ENCODE measurements at regions of chr11 and their contacts with region 1.

Region 1: GRCh38 chr11:36034551-36035331 is 90.9 kb downstream of the LDLRAD3 start:
- DNase-seq: peak; percentile 90
- ATAC-seq: peak; percentile 90
- H3K4me3 ChIP-seq: no peak overlapping the region
- H3K27ac ChIP-seq: no peak overlapping the region; the same call in 1 of the 2 replicates
- H3K4me1 ChIP-seq: peaks cover 25% of the 10 kb centered on the region
- H3K27me3 ChIP-seq: no peaks in the 10 kb centered on the region
- CTCF ChIP-seq: no peak
- POLR2A ChIP-seq: no peak
- RAD21 ChIP-seq: peak; percentile 40

Region 2: DNA sequence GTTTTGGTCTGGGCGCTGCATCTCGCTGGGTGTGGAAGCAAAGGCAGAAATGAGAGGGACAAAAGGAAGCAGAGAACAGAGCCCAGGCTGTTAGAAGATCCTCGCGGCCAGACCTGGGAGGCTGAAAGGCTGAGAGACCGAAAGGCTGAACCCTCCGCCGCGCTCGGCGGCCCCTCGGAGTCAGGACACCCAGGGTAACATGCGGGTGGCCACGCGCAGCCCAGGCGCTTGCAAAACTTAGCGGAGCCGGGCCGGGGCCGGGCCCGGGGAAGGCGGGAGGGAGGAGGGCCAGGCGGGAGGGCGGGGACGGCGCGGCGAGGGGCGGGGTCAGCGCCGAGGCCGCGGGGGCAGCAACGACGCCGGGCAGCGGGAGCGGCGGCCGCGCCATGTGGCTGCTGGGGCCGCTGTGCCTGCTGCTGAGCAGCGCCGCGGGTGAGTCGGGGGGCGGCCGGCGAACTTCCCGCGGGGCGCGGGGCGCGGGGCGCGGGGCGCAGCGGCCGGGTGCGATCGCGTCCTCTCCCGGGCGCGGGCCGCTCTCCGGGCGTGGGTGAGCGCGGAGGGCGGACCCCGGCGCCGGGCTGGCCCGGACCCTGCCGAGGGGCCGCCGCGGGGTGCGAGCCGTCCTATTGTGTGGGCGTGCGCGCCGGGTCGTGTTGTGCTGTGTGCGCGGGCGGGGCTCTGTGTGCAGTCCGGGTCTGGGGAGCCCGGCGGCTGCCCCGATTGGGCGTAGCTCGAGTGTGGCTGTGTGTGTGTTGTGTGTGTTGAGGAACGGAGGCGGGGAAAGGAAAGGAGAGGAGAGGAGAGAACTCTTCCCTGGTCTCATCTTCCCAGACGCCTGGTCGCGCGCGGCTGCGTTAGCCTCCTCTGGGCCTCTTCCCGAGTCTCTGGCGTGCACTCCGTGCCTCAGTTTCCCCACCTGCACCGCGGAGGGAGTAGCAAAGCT is 90.8 kb before region 1 on chr11 and contains the start of gene LDLRAD3:
- CTCF ChIA-PET with region 1: no interaction called
- POLR2A ChIA-PET with region 1: no interaction called
- dilution Hi-C with region 1: no loop called
- in situ Hi-C with region 1: no loop called
- intact Hi-C with region 1: loop called (anchors 5 kb)
- DNase-seq: peak; percentile 82
- ATAC-seq: peak; percentile 94
- H3K4me3 ChIP-seq: peak within 1 kb of the TSS; percentile 71
- H3K27ac ChIP-seq: peak within 1 kb of the TSS; percentile 91
- H3K4me1 ChIP-seq: peaks cover 4% of the 10 kb centered on the region; the same call in 1 of the 2 replicates
- H3K27me3 ChIP-seq: peaks cover 8% of the 10 kb centered on the region
- CTCF ChIP-seq: no peak
- POLR2A ChIP-seq: peak; percentile 17; the same call in 1 of the 2 replicates
- RAD21 ChIP-seq: no peak
- total RNA-seq, gene LDLRAD3: 2.7 and 3.6 TPM in 2 replicates

Region 3: GRCh38 chr11:36073411-36074203 is 38.9 kb after region 1 on chr11:
- CTCF ChIA-PET with region 1: no interaction called
- POLR2A ChIA-PET with region 1: no interaction called
- dilution Hi-C with region 1: no loop called
- in situ Hi-C with region 1: no loop called
- intact Hi-C with region 1: no loop called
- DNase-seq: peak; percentile 92
- ATAC-seq: peak; percentile 92
- H3K4me3 ChIP-seq: no peak overlapping the region
- H3K27ac ChIP-seq: peak overlapping the region; percentile 29
- H3K4me1 ChIP-seq: peaks cover 21% of the 10 kb centered on the region
- H3K27me3 ChIP-seq: no peaks in the 10 kb centered on the region
- CTCF ChIP-seq: no peak
- POLR2A ChIP-seq: no peak
- RAD21 ChIP-seq: 0 out of 2 replicates have a peak, but pooled peaks have one; percentile 8